ENCODE measurements at regions of chr6 and their contacts with region 1.

Region 1: GRCh38 chr6:12309070-12309469 is 18.9 kb downstream of the EDN1 start:
- DNase-seq: no peak
- H3K4me3 ChIP-seq: no peak overlapping the region
- H3K27ac ChIP-seq: no peak overlapping the region
- H3K4me1 ChIP-seq: no peaks in the 10 kb centered on the region
- H3K27me3 ChIP-seq: no peaks in the 10 kb centered on the region
- CTCF ChIP-seq: no peak
- EP300 ChIP-seq: no peak
- RAD21 ChIP-seq: no peak

Region 2: DNA sequence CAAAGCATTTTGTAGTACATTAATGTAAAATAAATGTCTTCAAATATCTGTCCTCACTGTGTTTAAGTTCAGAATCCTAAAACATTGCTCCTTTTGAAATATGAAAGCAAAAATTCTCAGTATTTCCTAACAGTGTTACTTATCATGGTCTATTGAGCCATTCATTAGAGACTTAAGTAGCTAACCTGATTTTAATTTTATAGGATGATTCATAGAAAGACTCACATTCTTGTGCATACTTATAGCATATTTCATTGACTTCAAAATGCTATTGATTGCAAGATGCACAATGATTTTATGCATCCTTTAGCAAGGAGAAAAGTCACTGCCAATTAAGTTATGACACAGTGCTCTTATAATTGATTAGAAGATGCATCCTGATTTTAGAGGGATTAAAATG is 211.3 kb before region 1 on chr6:
- CTCF ChIA-PET with region 1: no interaction called
- POLR2A ChIA-PET with region 1: no interaction called
- DNase-seq: no peak
- H3K4me3 ChIP-seq: no peak overlapping the region
- H3K27ac ChIP-seq: peak overlapping the region in 1 of 2 experiments; percentile 13; a peak in 1 of 4 replicates
- H3K4me1 ChIP-seq: peaks cover 0 to 13% of the 10 kb centered on the region in 2 experiments; a peak in 2 of 4 replicates
- H3K27me3 ChIP-seq: no peaks in the 10 kb centered on the region
- CTCF ChIP-seq: no peak
- EP300 ChIP-seq: 0 out of 4 replicates have a peak, but pooled peaks of 1 of the 2 experiments have one; percentile 17
- RAD21 ChIP-seq: no peak

Region 3: GRCh38 chr6:12289933-12290820 is 18.9 kb before region 1 on chr6 and contains the start of gene EDN1:
- CTCF ChIA-PET with region 1: interaction called, 34 read pairs
- POLR2A ChIA-PET with region 1: no interaction called
- DNase-seq: peak; percentile 82
- H3K4me3 ChIP-seq: peak within 1 kb of the TSS; percentile 62 to 79
- H3K27ac ChIP-seq: peak within 1 kb of the TSS; percentile 50 to 79; a peak in 3 of 4 replicates
- H3K4me1 ChIP-seq: peaks cover 2 to 4% of the 10 kb centered on the region in 2 experiments; a peak in 3 of 4 replicates
- H3K27me3 ChIP-seq: no peaks in the 10 kb centered on the region
- CTCF ChIP-seq: peak; percentile 46
- EP300 ChIP-seq: 0 out of 4 replicates have a peak, but pooled peaks of 1 of the 2 experiments have one; percentile 19
- RAD21 ChIP-seq: peak; percentile 33; the same call in 1 of the 2 replicates
- polyA plus RNA-seq, gene EDN1: 1.3 TPM in 2 replicates